CD14-positive monocyte (primary cell): ENCODE measurements at regions of chr20 and their contacts with region 1.

Region 1: DNA sequence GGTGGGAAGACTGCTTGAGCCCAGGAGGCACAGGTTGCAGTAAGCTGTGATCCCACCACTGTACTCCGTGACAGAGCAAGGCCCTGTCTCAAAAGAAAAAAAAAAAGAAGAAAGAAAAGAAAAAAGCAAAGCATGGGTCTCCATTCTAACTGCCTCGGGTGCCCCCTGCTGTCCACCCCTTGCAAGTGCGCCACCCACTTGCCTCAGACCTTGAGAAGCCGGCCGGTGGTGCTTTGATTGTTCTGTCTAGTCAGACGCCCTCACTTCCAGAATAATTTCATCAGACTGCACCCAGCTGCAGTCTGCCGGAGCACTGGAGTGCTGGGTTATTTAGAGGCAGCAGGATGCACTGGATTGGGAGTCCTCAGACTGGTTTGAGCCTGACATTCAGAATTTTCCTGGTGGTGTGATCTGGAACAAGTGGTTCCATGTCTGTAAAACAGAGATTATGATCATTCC is 17.6 kb upstream of the TM9SF4 start:
- DNase-seq: peak; percentile 63 to 77 (median 76)
- H3K4me3 ChIP-seq: no peak overlapping the region
- H3K4me3 Mint-ChIP-seq: no peak overlapping the region
- H3K27ac ChIP-seq: peak overlapping the region in 1 of 2 donors; percentile 64
- H3K27ac Mint-ChIP-seq: peak overlapping the region in 5 of 7 donors; percentile 60 to 84 (median 65)
- H3K4me1 ChIP-seq: peaks cover 0 to 11% of the 10 kb centered on the region in 2 donors
- H3K4me1 Mint-ChIP-seq: peaks cover 15% of the 10 kb centered on the region
- H3K27me3 ChIP-seq: no peaks in the 10 kb centered on the region
- H3K27me3 Mint-ChIP-seq: peaks cover 0 to 1% (median under 1%) of the 10 kb centered on the region in 3 donors
- CTCF ChIP-seq: peak; percentile 97

Region 2: DNA sequence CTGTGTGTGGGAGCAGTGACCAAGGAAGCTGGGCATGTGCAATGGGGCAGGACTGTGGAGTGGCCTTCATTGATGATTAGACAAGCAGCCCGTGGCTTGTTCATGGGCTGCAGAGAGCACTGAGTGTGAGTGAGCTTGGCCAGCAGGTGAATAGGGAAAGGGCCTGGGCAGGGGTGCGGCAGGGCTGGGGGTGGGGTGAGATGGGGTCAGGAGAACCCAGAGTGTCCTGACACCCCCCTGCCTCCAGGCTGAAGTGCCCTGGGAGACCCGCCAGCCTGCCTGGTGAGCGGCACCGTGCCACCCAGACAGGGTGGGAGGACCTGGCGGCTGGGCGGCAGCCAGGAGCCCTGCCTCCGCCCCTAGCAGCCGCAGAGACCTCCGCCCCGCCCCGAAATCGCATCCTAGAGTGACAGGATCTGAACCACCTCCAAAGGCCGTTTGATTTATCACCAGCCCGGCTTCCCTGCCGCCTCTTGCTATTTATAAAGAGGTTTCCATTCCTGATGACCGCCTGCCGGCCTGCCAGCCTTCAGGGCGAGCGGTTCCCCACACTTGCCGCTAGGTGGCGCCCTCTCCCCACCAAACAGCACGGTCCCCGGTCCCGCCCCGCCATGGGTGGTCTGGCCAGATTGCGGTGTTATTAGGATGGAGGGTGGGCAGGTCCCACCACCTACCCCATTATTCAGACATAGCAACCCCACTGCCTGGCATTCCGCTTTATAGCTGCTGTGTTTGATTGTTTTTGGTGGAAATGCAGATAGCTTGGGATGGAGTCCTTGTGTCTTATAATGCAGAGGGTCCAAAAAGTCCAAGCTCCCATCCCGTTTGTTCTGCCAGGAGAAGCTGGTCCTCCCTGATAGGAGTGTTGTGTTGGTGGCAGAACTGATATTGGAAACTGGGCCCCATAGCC is 269.2 kb before region 1 on chr20:
- intact Hi-C with region 1: loop called in 1 of 2 experiments (anchors 5 kb)
- DNase-seq: peak; percentile 54 to 68 (median 60)
- H3K4me3 ChIP-seq: no peak overlapping the region
- H3K4me3 Mint-ChIP-seq: peak overlapping the region; percentile 24 to 74
- H3K27ac ChIP-seq: no peak overlapping the region
- H3K27ac Mint-ChIP-seq: no peak overlapping the region
- H3K4me1 ChIP-seq: peaks cover 3 to 9% of the 10 kb centered on the region in 2 donors
- H3K4me1 Mint-ChIP-seq: peaks cover 4% of the 10 kb centered on the region
- H3K27me3 ChIP-seq: peaks cover 0 to 6% of the 10 kb centered on the region in 2 donors
- H3K27me3 Mint-ChIP-seq: peaks cover 2 to 8% (median 3%) of the 10 kb centered on the region in 3 donors
- CTCF ChIP-seq: peak; percentile 98

Region 3: GRCh38 chr20:31859998-31860709 is 231.8 kb before region 1 on chr20:
- intact Hi-C with region 1: loop called in 1 of 2 experiments (anchors 10 kb)
- DNase-seq: no peak
- H3K4me3 ChIP-seq: no peak overlapping the region
- H3K4me3 Mint-ChIP-seq: peak overlapping the region; percentile 31 to 70
- H3K27ac ChIP-seq: no peak overlapping the region
- H3K27ac Mint-ChIP-seq: no peak overlapping the region
- H3K4me1 ChIP-seq: peaks cover 11 to 22% of the 10 kb centered on the region in 2 donors
- H3K4me1 Mint-ChIP-seq: peaks cover 16% of the 10 kb centered on the region
- H3K27me3 ChIP-seq: peaks cover 24 to 33% of the 10 kb centered on the region in 2 donors
- H3K27me3 Mint-ChIP-seq: peaks cover 35 to 39% (median 35%) of the 10 kb centered on the region in 3 donors
- CTCF ChIP-seq: no peak

Region 4: GRCh38 chr20:31968291-31969126 is 123.4 kb before region 1 on chr20:
- intact Hi-C with region 1: loop called in 1 of 2 experiments (anchors 10 kb)
- DNase-seq: peak; percentile 62 to 65 (median 64)
- H3K4me3 ChIP-seq: peak overlapping the region; percentile 28 to 69 (median 41)
- H3K4me3 Mint-ChIP-seq: peak overlapping the region; percentile 85 to 97
- H3K27ac ChIP-seq: no peak overlapping the region
- H3K27ac Mint-ChIP-seq: no peak overlapping the region
- H3K4me1 ChIP-seq: peaks cover 8% of the 10 kb centered on the region in 2 donors
- H3K4me1 Mint-ChIP-seq: peaks cover 12% of the 10 kb centered on the region
- H3K27me3 ChIP-seq: peaks cover 15 to 27% of the 10 kb centered on the region in 2 donors
- H3K27me3 Mint-ChIP-seq: peaks cover 28 to 39% (median 32%) of the 10 kb centered on the region in 3 donors
- CTCF ChIP-seq: no peak